Caki2 (cell line): ENCODE measurements at regions of chr10 and their contacts with region 1.

Region 1: GRCh38 chr10:72309290-72310240 is 35.8 kb downstream of the DDIT4 start:
- DNase-seq: no peak

Region 2: GRCh38 chr10:72260588-72261322 is 48.8 kb before region 1 on chr10:
- in situ Hi-C with region 1: no loop called
- DNase-seq: peak; percentile 92

Region 3: GRCh38 chr10:72274730-72275350 is 34.7 kb before region 1 on chr10:
- in situ Hi-C with region 1: loop called (anchors 5 kb)
- DNase-seq: peak; percentile 70

Region 4: GRCh38 chr10:72379062-72379461 is 69.5 kb after region 1 on chr10:
- in situ Hi-C with region 1: no loop called
- DNase-seq: no peak